ENCODE measurements at regions of chr1 and their contacts with region 1.

Region 1: DNA sequence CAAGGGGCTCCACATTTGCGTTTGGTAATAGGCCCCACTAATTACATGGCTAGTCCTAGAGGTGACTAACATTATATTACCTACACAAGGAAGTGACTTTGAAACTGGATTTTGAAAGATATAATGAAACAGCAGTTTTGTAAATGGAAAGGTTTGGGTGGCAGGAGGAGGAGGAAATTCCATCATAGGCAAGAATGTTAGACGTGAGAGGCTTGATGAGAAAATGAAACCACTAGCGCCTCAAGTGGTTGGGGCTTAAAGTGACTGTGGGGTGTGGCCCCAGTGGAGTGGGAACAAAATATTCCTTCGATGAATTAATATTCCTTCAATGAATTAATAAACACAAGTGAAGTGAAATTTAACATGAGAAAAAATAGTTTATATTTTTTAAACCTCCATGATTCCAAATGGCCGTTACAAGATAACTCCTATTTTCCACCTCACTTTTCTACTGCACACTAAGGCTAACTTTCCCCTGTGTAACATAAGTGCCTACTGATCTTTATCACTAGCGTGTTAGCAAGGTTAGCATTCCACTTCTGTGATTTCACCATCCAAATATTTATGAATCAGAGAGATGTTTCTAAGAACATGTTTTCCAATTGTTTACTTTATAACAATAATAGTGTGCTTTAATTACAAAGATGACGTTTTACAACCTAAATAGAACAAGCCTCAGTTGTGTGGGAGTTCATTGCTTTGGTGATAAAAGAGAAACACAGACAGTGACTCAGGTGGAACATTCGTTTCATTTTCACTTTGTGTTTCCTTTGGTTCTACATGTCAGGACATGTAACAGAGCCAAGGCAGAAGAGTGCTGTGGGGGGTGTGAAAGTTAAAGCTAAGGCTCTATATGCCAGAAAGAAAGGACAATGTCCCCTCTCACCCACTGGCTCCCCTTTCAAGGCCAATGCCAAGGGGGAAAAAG is 12.5 kb upstream of the ATF3 start:
- DNase-seq: peak in 7 of 9 donors; percentile 28 to 78 (median 50)
- ATAC-seq: peak; percentile 94
- H3K4me3 ChIP-seq: peak overlapping the region; percentile 14
- H3K4me3 Mint-ChIP-seq: peak overlapping the region; percentile 4 to 84 (median 72)
- H3K27ac ChIP-seq: no peak overlapping the region
- H3K27ac Mint-ChIP-seq: peak overlapping the region; percentile 19 to 99 (median 79)
- H3K4me1 ChIP-seq: peaks cover 8 to 11% of the 10 kb centered on the region in 2 donors
- H3K4me1 Mint-ChIP-seq: peaks cover 0 to 27% (median 14%) of the 10 kb centered on the region in 7 donors
- H3K27me3 ChIP-seq: no peaks in the 10 kb centered on the region
- H3K27me3 Mint-ChIP-seq: peaks cover 8 to 19% (median 12%) of the 10 kb centered on the region in 5 donors

Region 2: DNA sequence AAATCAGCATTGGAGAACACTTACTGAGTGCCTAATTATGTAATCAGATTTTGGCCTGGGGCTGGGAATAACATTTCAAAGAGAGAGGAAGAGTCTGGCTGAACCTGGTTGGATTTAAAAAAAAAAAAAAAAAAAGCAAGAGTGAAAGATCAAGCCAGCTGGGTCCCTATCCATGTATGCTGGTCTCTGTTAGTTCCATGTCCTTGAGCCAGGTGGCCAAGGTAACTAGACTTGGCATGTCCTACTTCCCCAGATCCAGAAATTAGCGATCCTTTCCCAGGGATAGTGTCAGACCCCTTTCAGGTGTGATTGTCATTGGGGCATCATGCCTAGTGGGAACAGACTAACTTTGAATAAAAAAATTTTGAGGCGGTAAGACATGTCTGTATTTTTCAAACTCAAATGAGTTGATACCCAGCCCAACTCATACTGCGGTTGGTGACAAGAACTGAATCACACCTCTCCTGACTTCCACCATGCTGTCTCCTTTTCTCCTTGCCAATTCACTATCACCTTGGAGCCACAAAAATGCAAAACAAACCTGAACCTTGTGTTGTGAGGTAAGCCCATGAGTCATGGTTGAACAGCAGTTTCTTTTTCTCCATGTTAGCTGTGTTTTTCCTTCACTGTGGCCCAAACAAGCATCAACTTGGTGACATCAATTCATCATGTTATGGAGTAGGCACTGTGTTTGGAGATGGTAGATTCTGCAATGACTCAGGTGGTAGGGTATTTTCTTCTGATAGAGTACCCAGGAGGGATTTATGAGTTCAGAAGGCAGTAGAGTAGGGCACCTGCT is 335.3 kb before region 1 on chr1:
- CTCF ChIA-PET with region 1: no interaction called
- POLR2A ChIA-PET with region 1: no interaction called
- intact Hi-C with region 1: no loop called
- DNase-seq: peak in 1 of 9 donors; percentile 16
- ATAC-seq: peak; percentile 17
- H3K4me3 ChIP-seq: no peak overlapping the region
- H3K4me3 Mint-ChIP-seq: peak overlapping the region in 2 of 10 donors; percentile 5 to 12
- H3K27ac ChIP-seq: no peak overlapping the region
- H3K27ac Mint-ChIP-seq: peak overlapping the region in 3 of 9 donors; percentile 2 to 65 (median 50)
- H3K4me1 ChIP-seq: peaks cover 16 to 17% of the 10 kb centered on the region in 2 donors
- H3K4me1 Mint-ChIP-seq: peaks cover 26 to 54% (median 42%) of the 10 kb centered on the region in 7 donors
- H3K27me3 ChIP-seq: no peaks in the 10 kb centered on the region
- H3K27me3 Mint-ChIP-seq: no peaks in the 10 kb centered on the region

Region 3: GRCh38 chr1:212630158-212630900 is 34.3 kb after region 1 on chr1:
- CTCF ChIA-PET with region 1: no interaction called
- POLR2A ChIA-PET with region 1: no interaction called
- intact Hi-C with region 1: loop called in 1 of 2 experiments (anchors 1 kb)
- DNase-seq: peak in 8 of 9 donors; percentile 26 to 59 (median 44)
- ATAC-seq: peak; percentile 97
- H3K4me3 ChIP-seq: no peak overlapping the region
- H3K4me3 Mint-ChIP-seq: no peak overlapping the region
- H3K27ac ChIP-seq: no peak overlapping the region
- H3K27ac Mint-ChIP-seq: no peak overlapping the region
- H3K4me1 ChIP-seq: peaks cover 0 to 2% of the 10 kb centered on the region in 2 donors
- H3K4me1 Mint-ChIP-seq: peaks cover 0 to 14% (median 5%) of the 10 kb centered on the region in 7 donors
- H3K27me3 ChIP-seq: no peaks in the 10 kb centered on the region
- H3K27me3 Mint-ChIP-seq: peaks cover 0 to 16% (median 6%) of the 10 kb centered on the region in 5 donors